ENCODE measurements at regions of chr13 and their contacts with region 1.

Region 1: GRCh38 chr13:33723772-33724435 is 94.0 kb upstream of the RFC3 start:
- DNase-seq: peak; percentile 74
- ATAC-seq: peak; percentile 89 to 91

Region 2: GRCh38 chr13:32586080-32586900 is 1137.6 kb before region 1 on chr13 and contains the start of gene PDS5B:
- intact Hi-C with region 1: loop called in 1 of 2 experiments (anchors 5 kb)
- DNase-seq: peak; percentile 94
- ATAC-seq: peak; percentile 97
- total RNA-seq, gene PDS5B: 19.5 to 27.2 TPM

Region 3: GRCh38 chr13:33204130-33204927 is 519.6 kb before region 1 on chr13:
- intact Hi-C with region 1: loop called in 1 of 2 experiments (anchors 10 kb)
- DNase-seq: peak; percentile 86
- ATAC-seq: peak; percentile 82 to 87

Region 4: DNA sequence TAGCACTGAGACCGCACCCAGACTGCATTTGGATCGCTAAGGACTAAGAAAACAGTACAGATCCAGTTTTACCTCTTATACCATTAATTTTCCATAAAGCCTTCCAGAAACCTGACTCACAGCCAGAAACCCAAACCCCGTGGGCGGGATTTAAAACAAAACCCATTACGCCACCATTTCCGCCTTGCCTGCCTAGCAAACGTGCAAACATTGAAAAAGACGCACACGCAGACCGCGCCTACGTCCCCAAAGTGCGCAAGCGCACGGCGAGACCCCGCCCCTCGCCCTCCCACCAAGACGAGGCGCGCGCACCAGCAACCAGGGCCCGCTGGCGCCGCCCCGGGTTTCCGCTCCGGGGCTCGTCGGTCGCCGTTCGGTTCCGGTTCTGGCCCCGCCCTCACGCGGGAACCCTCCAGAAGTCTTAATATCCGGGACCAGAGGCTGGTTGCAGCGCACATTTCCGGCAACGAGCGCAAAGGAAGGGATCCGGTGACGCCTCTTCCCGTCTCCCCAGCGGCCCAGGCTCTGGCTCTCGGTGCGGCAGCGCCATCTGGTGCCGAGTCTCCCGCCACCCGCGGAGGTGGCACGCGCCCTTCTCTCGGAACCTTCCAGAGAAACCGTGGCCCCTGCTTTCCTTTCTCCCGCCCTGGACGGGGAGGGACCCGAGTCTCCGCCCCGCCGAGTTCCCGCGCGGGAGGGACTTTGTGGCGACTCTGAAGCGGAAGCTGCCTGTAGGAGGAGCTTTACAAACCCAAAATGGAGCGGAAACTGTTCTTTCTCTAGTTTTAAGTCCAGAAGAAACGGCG is 181.4 kb before region 1 on chr13:
- intact Hi-C with region 1: loop called (anchors 2 to 10 kb)
- DNase-seq: peak; percentile 99
- ATAC-seq: peak; percentile 93 to 96

Region 5: GRCh38 chr13:33610471-33611015 is 113.4 kb before region 1 on chr13:
- intact Hi-C with region 1: loop called in 1 of 2 experiments (anchors 5 kb)
- DNase-seq: peak; percentile 82
- ATAC-seq: peak; percentile 87 to 91

Region 6: DNA sequence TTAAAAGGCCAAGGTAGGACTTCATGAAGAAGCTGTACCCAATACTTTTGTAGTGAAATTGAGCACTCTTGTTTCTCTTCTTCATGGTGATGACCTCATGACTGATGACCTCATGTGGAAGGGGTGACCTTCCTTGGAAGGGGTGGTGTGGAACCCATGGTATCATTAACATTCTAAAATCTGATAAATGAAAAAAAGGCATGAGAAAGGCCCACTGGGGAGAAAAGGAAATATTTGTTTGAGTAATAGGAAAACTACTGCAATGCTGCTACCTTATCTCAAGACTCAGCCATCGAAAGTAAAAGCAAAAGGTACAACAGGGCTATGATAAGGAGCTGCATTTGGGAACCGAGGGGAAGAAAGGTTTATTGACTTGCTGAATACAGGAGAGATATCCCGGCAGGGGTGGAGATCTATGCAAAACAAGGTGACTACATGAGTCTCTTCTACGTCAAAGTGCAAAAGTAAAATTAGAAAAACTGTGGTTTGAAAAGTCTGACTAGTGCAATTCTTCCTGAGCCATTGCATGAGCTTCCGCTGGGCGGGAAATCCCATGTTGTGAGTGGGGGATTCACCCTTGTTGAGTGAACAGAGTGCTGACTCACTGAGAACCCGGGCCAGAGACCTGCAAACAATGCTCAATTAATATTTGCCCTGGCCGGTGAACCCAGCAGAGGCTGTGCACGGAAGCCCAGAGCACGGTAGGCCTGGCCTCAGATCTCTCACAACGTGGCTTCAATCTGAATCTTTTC is 44.8 kb before region 1 on chr13:
- intact Hi-C with region 1: loop called in 1 of 2 experiments (anchors 2 kb)
- DNase-seq: peak; percentile 69
- ATAC-seq: peak; percentile 46 to 80